Heart right ventricle (tissue), 16 donors: ENCODE measurements at regions of chr5 and their contacts with region 1.

Region 1: GRCh38 chr5:16378762-16379161 is 86.8 kb downstream of the ZNF622 start:
- DNase-seq: peak in 1 of 2 donors; percentile 25
- ATAC-seq: peak; percentile 65 to 98 (median 93)
- H3K4me3 ChIP-seq: no peak overlapping the region
- H3K27ac ChIP-seq: peak overlapping the region in 2 of 10 donors; percentile 28 to 48
- H3K4me1 ChIP-seq: peaks cover 0 to 10% (median 0%) of the 10 kb centered on the region in 9 donors
- H3K27me3 ChIP-seq: no peaks in the 10 kb centered on the region
- CTCF ChIP-seq: no peak

Region 2: DNA sequence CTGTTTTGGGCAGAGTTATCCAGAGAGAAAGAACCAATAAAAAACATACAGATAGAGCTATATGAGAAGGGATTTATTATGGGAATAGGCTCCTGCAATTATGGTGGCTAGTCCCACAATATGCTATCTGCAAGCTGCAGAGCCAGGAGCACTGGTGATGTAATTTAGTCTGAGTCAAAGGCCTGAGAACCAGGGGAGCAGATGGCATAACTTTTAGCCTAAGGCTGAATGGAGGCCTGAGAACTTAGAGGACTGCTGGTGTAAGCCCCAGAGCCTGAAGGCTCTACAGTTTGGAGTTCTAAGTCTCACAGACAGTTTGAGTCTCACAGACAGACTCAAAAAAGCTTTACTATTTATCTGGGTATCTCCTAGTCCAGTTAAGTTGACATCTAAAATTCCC is 615.0 kb before region 1 on chr5:
- intact Hi-C with region 1: no loop called
- DNase-seq: no peak
- ATAC-seq: no peak
- H3K4me3 ChIP-seq: no peak overlapping the region
- H3K27ac ChIP-seq: no peak overlapping the region
- H3K4me1 ChIP-seq: peaks cover 0 to 19% (median 0%) of the 10 kb centered on the region in 9 donors
- H3K27me3 ChIP-seq: no peaks in the 10 kb centered on the region
- CTCF ChIP-seq: no peak

Region 3: DNA sequence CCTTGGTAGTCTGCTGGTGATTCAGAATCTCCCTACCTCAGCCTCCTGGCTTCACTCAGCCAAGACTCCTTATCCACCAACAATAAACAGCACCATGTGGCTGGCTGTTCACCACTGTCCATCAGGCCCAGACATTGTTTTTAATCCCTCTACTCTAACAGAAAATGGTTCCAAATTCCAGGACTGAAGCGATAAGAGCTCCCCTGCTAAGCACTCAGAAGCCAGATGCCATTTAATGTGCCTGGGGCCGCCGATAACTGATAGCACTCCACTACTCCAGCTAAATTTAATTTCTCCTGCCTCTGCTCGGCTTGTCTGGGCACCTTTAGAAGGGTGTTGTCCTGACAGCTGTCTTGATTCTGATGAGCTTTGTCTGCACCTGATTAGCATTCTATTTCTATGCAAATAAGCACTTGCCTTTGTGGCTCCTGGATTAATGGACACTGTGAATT is 39.7 kb after region 1 on chr5:
- intact Hi-C with region 1: loop called in 1 of 10 experiments (anchors 5 kb)
- DNase-seq: peak; percentile 24 to 50
- ATAC-seq: peak; percentile 87 to 98 (median 96)
- H3K4me3 ChIP-seq: no peak overlapping the region
- H3K27ac ChIP-seq: peak overlapping the region in 6 of 10 donors; percentile 61 to 72 (median 66)
- H3K4me1 ChIP-seq: peaks cover 0 to 15% (median 4%) of the 10 kb centered on the region in 9 donors
- H3K27me3 ChIP-seq: no peaks in the 10 kb centered on the region
- CTCF ChIP-seq: no peak

Region 4: DNA sequence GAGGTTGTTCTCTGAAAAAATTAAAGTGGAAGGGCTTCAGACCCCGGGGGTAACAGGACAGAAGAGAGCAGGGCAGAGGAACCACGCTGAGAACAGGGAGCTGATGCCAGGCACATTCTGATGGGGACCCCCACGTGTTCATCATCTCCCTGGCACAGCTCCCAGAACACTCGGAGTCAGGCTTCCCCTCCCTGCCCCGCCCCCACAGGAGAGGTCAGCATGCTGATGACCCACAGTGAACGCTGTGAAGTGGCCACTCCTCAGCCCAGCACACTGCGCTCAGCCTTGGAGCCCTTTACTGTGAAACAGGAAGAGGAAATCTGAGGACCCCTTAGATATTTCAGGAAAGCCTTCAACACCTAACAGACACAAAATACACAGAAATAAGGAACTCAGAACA is 221.6 kb after region 1 on chr5:
- intact Hi-C with region 1: no loop called
- DNase-seq: peak; percentile 61 to 84
- ATAC-seq: peak; percentile 60 to 85 (median 78)
- H3K4me3 ChIP-seq: no peak overlapping the region
- H3K27ac ChIP-seq: peak overlapping the region in 1 of 10 donors; percentile 25
- H3K4me1 ChIP-seq: peaks cover 0 to 33% (median 25%) of the 10 kb centered on the region in 9 donors
- H3K27me3 ChIP-seq: no peaks in the 10 kb centered on the region
- CTCF ChIP-seq: no peak